ENCODE measurements at regions of chr1 and their contacts with region 1.

Region 1: DNA sequence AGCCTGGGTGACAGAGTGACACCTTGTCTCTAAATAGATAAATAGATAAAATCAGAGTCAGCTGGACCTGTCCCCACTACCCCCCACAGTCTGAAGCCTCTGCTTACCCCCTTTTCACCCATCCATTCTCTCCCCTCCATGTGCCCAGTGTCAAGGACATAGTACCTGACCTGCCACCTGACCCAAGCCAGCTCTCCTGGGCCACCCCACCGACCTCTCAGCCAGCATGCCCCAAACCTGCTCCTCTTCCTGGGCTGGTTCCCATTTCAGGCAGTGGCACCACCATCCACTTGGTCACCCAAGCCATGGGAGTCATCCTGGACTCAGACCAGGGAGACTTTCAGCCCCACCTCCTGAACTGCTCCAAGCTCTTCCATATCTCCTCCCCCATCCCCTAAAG is 28.2 kb downstream of the CITED4 start:
- H3K4me3 ChIP-seq: no peak overlapping the region
- H3K27ac ChIP-seq: no peak overlapping the region
- H3K4me1 ChIP-seq: no peaks in the 10 kb centered on the region
- CTCF ChIP-seq: no peak

Region 2: GRCh38 chr1:40783001-40783905 is 50.7 kb before region 1 on chr1 and contains the start of gene KCNQ4:
- CTCF ChIA-PET with region 1: no interaction called
- POLR2A ChIA-PET with region 1: no interaction called
- H3K4me3 ChIP-seq: peak within 1 kb of the TSS; percentile 24
- H3K27ac ChIP-seq: no peak within 1 kb of the TSS; the same call in 1 of the 2 replicates
- H3K4me1 ChIP-seq: peaks cover 5% of the 10 kb centered on the region; the same call in 1 of the 2 replicates
- CTCF ChIP-seq: peak; percentile 44

Region 3: GRCh38 chr1:40796939-40797667 is 36.9 kb before region 1 on chr1:
- CTCF ChIA-PET with region 1: no interaction called
- POLR2A ChIA-PET with region 1: interaction called, 12 read pairs
- H3K4me3 ChIP-seq: no peak overlapping the region
- H3K27ac ChIP-seq: no peak overlapping the region
- H3K4me1 ChIP-seq: no peaks in the 10 kb centered on the region
- CTCF ChIP-seq: no peak

Region 4: GRCh38 chr1:40862008-40862863 is 28.3 kb after region 1 on chr1 and contains the start of gene CITED4:
- CTCF ChIA-PET with region 1: no interaction called
- POLR2A ChIA-PET with region 1: no interaction called
- H3K4me3 ChIP-seq: peak within 1 kb of the TSS; percentile 41
- H3K27ac ChIP-seq: no peak within 1 kb of the TSS
- H3K4me1 ChIP-seq: no peaks in the 10 kb centered on the region
- CTCF ChIP-seq: peak; percentile 18; the same call in 1 of the 2 replicates